Right ventricle myocardium inferior (tissue), 1 donor: ENCODE measurements at regions of chr16 and their contacts with region 1.

Region 1: DNA sequence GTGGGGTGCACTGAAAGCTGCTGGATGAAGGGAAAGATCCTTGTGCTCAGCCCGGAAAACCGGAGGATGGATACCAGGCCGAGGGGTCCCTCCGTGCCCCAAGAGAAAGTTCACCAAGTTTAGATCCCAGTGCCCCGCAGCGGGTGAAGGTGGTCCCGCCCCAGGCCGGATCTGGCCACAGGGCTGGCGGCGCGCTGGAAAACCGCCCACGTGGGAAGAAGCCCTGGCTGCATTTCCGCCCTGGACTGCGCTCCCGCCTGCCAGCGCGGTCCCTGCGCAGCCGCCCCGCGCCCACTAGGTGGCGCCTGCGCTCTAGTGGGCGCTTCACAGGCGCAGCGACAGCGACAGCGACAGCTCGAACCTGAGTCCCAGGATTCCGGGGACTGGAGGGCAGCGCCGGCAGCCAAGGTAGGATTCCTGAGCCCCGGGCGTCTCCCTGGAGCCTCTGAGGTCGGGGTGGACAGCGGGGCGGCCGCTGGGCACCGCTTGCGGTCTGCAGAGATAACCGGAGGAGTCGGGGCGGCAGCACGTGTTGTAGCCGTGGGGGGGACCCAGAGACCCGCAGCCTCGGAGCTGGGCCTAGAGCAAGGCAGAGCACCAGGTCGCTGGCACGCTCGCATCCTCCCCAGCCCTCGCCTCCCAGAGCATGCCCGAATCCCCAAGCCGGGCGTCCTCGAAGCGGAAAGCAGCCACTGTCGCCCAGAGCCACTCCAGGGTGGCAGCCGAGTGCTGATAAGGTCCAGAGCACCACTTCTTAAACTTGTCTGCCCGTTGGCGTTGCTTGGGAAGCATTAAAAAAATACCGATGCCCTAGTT is at the start of gene CHD9:
- DNase-seq: peak; percentile 93
- ATAC-seq: peak; percentile 92
- total RNA-seq, gene CHD9: 37.6 TPM

Region 2: DNA sequence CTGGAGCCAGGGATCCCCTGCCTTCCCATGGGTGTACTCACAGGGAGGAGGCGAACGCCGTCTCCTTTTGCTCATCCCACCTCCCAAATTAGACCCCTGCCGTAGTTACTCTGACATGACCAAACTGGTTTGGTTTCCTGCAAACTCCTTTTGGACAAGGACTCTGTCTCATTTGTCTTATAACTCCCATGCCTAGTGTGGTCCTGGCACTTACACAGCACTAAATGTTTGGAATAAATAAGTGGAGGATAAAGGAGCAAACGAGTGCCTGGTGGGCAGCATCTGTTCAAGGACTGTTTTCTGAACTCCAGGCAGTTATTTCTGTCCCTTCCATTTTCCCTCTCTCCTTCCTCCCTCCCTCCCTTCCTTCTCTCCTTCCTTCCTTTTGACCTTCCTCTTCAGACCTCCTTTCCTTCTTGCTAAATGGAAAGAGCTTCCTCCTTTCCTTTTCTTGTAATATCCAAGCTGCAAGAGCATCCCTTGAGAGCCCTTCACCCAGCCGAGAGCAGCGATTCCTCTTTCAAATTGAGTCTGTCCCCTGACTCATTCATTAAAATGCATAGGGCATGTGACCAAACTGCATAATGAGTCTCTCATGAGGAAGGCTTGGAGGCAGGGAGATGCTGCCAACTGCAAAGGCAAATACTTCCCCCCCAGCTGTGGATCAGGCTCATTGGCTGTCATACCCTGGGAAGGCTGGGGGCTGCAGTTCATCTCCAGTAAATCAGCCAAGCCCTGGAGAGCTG is 36.8 kb after region 1 on chr16:
- intact Hi-C with region 1: loop called (anchors 1 kb)
- DNase-seq: peak; percentile 82
- ATAC-seq: peak; percentile 57

Region 3: DNA sequence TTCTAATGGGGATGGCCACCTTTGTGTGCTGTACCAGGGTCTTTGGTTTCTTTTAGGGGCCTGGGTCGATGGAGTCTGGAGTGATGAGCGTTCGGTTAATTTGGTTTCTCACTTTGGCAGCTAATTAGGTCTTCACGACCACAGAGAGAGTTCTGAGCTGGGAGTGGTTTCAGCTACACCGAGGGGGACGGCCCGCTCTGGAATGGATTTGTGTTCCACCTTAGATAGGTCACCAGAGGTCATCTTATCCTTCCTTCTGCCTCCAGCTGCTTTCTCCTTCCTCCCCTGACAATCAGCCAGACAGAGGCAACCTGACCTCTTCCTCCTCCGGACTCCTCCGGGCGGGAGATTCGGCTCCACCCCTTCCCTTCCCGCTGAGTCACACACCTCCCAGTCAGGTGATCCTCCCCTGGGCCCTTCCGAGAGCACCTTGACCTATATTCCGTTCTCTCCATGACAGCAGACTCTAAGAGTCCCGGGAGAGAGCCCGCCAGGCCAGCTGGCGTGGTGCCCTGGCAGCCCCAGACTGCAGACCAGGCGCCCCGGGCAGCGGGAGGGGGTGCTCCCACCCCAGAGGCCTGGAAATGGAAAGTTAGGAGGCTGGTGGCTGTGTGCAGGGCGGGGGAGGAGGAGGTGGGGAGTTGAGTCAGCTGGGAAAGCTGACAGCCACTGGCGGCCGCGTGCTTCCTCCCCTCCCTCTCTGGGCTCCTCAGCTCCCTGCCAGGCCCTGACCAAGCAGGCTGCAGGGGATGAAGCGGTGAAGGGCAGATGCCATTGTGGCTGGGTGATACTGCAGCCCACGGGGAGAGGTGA is 44.6 kb after region 1 on chr16:
- intact Hi-C with region 1: loop called (anchors 1 kb)
- DNase-seq: peak; percentile 94
- ATAC-seq: peak; percentile 91

Region 4: GRCh38 chr16:53130159-53131049 is 75.5 kb after region 1 on chr16:
- intact Hi-C with region 1: loop called (anchors 1 kb)
- DNase-seq: peak; percentile 98
- ATAC-seq: peak; percentile 95

Region 5: DNA sequence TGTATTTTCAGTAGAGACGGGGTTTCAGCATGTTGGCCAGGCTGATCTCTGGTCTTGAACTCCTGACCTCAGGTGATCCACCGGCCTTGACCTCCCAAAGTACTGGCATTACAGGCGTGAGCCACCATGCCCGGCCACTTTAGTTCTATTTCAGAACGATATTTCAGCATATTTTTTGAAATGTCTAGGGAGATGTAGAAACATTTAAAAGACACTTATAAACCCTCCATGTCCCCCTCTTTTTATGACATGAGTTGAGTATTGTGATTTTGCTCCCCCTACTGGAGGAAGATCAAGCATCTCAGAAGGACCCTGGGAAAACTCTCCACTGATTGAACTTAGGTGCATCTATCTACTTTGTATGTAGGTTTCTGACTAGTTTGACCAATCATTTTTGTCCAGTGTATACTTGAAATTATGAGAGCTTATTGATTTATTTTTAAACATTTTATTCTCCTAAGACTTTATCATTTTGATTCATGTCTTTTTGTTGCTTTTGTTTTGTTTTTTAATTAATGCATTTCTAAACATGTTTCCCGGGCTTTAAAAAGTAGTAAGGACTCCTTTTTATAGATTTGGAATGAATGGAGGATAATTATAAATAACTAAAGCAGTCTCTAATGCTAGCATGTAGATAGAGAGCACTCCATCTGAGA is 105.0 kb after region 1 on chr16:
- intact Hi-C with region 1: loop called (anchors 1 kb)
- DNase-seq: no peak
- ATAC-seq: peak; percentile 50

Region 6: GRCh38 chr16:53207810-53208752 is 153.2 kb after region 1 on chr16:
- intact Hi-C with region 1: loop called (anchors 1 kb)
- DNase-seq: no peak
- ATAC-seq: peak; percentile 95

Region 7: GRCh38 chr16:53703590-53704444 is 648.9 kb after region 1 on chr16 and contains the starts of genes FTO and RPGRIP1L:
- intact Hi-C with region 1: loop called (anchors 10 kb)
- DNase-seq: peak; percentile 98
- ATAC-seq: peak; percentile 99
- total RNA-seq, gene FTO: 69.5 TPM
- total RNA-seq, gene RPGRIP1L: 2.1 TPM